ENCODE measurements at regions of chr1 and their contacts with region 1.

Region 1: GRCh38 chr1:62841587-62842169 is 57.7 kb downstream of the ATG4C start:
- DNase-seq: peak; percentile 84
- H3K4me3 ChIP-seq: no peak overlapping the region
- H3K27ac ChIP-seq: no peak overlapping the region
- H3K4me1 ChIP-seq: peaks cover 13% of the 10 kb centered on the region
- H3K27me3 ChIP-seq: no peaks in the 10 kb centered on the region
- CTCF ChIP-seq: peak; percentile 77

Region 2: GRCh38 chr1:62989497-62989896 is 147.8 kb after region 1 on chr1:
- CTCF ChIA-PET with region 1: no interaction called
- POLR2A ChIA-PET with region 1: no interaction called
- intact Hi-C with region 1: loop called (anchors 10 kb)
- DNase-seq: peak; percentile 56
- H3K4me3 ChIP-seq: no peak overlapping the region
- H3K27ac ChIP-seq: no peak overlapping the region
- H3K4me1 ChIP-seq: no peaks in the 10 kb centered on the region
- H3K27me3 ChIP-seq: no peaks in the 10 kb centered on the region
- CTCF ChIP-seq: peak; percentile 62

Region 3: DNA sequence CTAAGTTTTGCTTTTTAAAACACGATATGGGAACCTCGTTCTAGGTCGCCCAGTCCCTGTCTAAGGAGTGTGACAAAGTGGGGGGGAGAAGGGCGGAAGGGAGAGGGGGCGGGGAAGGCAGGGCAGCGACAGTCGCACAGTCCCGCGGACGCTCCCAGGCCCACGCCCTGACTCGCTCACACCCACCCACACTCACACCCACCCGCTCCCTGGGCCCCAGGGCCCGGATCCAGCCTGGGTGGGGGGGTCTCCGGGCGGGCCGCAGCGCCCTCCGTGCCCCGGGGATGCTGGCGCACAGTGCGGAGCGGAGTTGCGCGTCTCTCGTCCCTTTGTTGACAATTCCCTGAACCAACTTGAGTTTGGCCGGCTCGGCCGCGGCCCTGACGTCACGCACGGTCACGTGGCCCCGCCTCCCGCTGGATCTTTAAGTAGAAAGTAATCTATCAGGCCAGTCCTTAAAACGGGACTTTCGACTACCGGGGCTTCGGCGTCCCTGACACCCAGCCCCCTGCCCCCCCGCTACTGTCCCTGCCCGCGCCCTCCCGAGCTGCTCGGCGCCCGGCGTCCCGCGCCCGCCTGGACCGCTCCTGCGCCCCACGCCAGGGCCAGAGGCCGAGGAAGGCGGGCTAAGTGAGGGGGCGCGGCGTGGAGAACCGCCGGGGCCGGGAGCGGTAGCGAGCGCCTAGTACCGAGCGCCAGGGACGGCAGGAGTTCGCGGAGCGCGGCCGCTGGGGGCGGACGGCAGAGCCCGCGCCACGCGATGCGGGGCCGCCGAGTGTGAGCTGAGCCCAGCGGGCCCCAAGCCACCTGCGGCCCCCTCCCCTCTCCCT is 480.7 kb after region 1 on chr1 and contains the start of gene FOXD3:
- CTCF ChIA-PET with region 1: interaction called, 3 read pairs
- POLR2A ChIA-PET with region 1: interaction called, 10 read pairs
- intact Hi-C with region 1: loop called (anchors 5 kb)
- DNase-seq: peak; percentile 87
- H3K4me3 ChIP-seq: peak within 1 kb of the TSS; percentile 81
- H3K27ac ChIP-seq: peak within 1 kb of the TSS; percentile 68
- H3K4me1 ChIP-seq: peaks cover 8% of the 10 kb centered on the region
- H3K27me3 ChIP-seq: peaks cover 23% of the 10 kb centered on the region
- CTCF ChIP-seq: no peak
- total RNA-seq, gene FOXD3: 4.5 and 4.7 TPM in 2 replicates

Region 4: DNA sequence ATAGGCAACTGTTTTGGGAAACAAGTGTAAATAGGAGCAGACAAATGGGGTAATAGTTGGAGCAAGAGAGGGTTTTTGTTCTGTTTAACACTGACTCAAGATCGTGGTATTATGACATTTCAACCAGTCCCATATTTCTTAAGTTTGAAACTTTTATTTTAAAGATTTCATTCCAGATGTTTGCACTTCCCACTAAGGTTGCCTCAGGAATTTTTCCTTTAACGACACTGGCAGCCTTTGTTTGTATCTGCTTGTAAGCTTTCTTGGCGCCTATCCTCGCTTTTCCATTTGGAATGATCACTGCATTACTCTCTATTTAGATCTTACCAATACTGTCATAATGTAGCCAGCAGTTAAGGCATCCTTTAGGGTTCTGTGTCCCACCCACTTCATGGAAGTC is 593.5 kb after region 1 on chr1:
- CTCF ChIA-PET with region 1: no interaction called
- POLR2A ChIA-PET with region 1: no interaction called
- intact Hi-C with region 1: loop called (anchors 10 kb)
- DNase-seq: no peak
- H3K4me3 ChIP-seq: no peak overlapping the region
- H3K27ac ChIP-seq: no peak overlapping the region
- H3K4me1 ChIP-seq: peaks cover 10% of the 10 kb centered on the region
- H3K27me3 ChIP-seq: no peaks in the 10 kb centered on the region
- CTCF ChIP-seq: no peak

Region 5: DNA sequence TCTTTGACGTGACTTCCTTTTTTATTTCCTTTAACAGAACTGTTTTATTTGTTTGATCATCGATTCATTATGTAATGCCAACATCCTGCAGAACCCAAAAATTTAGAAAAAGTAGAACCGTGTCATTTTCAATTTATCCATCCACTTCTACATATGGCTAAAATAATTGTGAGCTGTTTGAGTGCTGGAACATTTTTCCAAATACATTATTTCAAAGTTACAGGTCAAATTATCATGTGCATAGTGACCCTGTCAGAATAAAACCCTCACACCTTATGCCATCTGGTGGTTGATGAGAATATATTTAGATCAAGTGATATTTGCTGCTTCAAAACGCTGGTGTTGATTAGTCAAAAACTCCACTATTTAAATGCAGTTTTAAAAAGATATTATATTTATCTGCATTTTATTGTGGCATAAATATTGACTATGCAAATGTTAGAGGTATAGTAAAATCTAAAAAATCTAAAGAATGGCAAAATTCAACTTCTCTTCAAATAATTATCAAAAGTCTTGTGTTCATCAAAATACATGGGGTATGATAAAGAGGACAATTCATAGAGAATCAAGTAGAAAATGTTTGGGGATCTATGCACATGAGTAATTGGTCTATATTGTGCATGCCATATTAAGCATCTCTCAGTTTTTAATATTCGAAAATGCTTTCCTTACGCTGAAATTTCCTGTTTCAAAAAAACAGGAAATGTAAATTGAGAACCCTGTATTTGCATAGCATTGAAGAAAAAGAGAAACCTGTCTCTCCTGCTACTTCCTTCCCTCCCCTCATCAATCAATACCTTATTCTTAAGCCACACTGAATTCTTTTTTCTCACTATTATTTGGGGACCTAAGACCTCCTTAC is 1401.4 kb after region 1 on chr1:
- CTCF ChIA-PET with region 1: no interaction called
- POLR2A ChIA-PET with region 1: no interaction called
- intact Hi-C with region 1: loop called (anchors 10 kb)
- DNase-seq: peak; percentile 75
- H3K4me3 ChIP-seq: peak overlapping the region; percentile 16
- H3K27ac ChIP-seq: peak overlapping the region; percentile 72
- H3K4me1 ChIP-seq: peaks cover 48% of the 10 kb centered on the region
- H3K27me3 ChIP-seq: no peaks in the 10 kb centered on the region
- CTCF ChIP-seq: peak; percentile 72

Measured in A673 (cell line).